Activated CD8-positive, alpha-beta T cell treated with anti-CD3 and anti-CD28 coated beads, Interleukin-2, amount 10 ng/mL, durations not matched to agents 7 days and 5 days (primary cell): ENCODE measurements at regions of chr3 and their contacts with region 1.

Region 1: DNA sequence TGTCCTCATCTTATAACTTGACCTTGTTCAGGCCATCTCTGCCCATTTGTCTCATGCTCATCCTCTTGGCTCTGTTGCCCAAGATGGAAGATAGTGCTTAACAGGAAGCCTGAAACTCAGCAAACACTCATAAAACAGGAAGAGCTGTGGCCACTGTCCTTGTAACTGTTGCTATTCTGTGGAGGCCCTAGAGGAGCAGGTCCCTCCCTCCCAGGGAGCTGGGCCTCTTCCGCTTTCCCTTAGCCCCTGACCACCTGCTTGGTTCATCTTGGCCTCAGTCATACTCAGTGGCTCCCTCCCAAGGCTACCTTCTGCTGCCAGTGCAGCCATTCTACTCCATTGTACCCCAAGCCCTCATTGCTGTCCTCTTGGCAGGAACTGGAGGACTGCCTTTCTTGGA is 3.5 kb downstream of the MAPKAPK3 start:
- DNase-seq: no peak
- ATAC-seq: no peak
- H3K4me3 Mint-ChIP-seq: peak overlapping the region; percentile 95
- H3K27ac Mint-ChIP-seq: peak overlapping the region; percentile 86
- H3K4me1 Mint-ChIP-seq: peaks cover 77% of the 10 kb centered on the region
- H3K27me3 Mint-ChIP-seq: no peaks in the 10 kb centered on the region

Region 2: DNA sequence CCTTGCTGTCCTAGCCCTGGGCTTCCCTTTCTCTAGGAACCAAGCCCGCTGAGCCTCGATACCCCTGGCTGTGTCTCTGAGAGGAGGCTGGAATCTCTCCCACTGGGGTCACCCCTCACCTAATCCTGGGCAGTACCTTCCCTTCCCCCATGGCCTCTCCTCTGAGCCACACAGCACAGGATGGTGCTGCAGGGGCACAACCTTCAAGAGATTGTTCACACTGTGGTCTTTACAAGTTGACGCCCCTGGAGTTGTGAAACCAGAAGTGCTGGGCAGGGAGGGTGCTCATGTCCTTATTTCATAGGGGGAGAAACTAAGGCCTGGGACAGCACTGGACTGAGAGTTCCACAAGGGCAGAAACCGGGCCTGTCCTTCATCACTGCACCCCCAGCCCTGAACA is 190.2 kb before region 1 on chr3:
- CTCF ChIA-PET with region 1: no interaction called
- POLR2A ChIA-PET with region 1: no interaction called
- DNase-seq: no peak
- ATAC-seq: peak; percentile 30
- H3K4me3 Mint-ChIP-seq: no peak overlapping the region
- H3K27ac Mint-ChIP-seq: peak overlapping the region; percentile 27
- H3K4me1 Mint-ChIP-seq: peaks cover 5% of the 10 kb centered on the region
- H3K27me3 Mint-ChIP-seq: no peaks in the 10 kb centered on the region

Region 3: GRCh38 chr3:50587806-50588758 is 32.3 kb before region 1 on chr3:
- CTCF ChIA-PET with region 1: interaction called, 1,321 read pairs
- POLR2A ChIA-PET with region 1: interaction called, 21 read pairs
- DNase-seq: peak; percentile 78
- ATAC-seq: peak; percentile 41
- H3K4me3 Mint-ChIP-seq: peak overlapping the region; percentile 62
- H3K27ac Mint-ChIP-seq: peak overlapping the region; percentile 98
- H3K4me1 Mint-ChIP-seq: peaks cover 97% of the 10 kb centered on the region
- H3K27me3 Mint-ChIP-seq: no peaks in the 10 kb centered on the region

Region 4: GRCh38 chr3:50600841-50601591 is 19.4 kb before region 1 on chr3:
- CTCF ChIA-PET with region 1: interaction called, 14 read pairs
- POLR2A ChIA-PET with region 1: interaction called, 398 read pairs
- DNase-seq: peak; percentile 91
- ATAC-seq: peak; percentile 61
- H3K4me3 Mint-ChIP-seq: peak overlapping the region; percentile 94
- H3K27ac Mint-ChIP-seq: peak overlapping the region; percentile 97
- H3K4me1 Mint-ChIP-seq: peaks cover 89% of the 10 kb centered on the region
- H3K27me3 Mint-ChIP-seq: no peaks in the 10 kb centered on the region